MCF 10A (cell line): ENCODE measurements at regions of chr6 and their contacts with region 1.

Region 1: DNA sequence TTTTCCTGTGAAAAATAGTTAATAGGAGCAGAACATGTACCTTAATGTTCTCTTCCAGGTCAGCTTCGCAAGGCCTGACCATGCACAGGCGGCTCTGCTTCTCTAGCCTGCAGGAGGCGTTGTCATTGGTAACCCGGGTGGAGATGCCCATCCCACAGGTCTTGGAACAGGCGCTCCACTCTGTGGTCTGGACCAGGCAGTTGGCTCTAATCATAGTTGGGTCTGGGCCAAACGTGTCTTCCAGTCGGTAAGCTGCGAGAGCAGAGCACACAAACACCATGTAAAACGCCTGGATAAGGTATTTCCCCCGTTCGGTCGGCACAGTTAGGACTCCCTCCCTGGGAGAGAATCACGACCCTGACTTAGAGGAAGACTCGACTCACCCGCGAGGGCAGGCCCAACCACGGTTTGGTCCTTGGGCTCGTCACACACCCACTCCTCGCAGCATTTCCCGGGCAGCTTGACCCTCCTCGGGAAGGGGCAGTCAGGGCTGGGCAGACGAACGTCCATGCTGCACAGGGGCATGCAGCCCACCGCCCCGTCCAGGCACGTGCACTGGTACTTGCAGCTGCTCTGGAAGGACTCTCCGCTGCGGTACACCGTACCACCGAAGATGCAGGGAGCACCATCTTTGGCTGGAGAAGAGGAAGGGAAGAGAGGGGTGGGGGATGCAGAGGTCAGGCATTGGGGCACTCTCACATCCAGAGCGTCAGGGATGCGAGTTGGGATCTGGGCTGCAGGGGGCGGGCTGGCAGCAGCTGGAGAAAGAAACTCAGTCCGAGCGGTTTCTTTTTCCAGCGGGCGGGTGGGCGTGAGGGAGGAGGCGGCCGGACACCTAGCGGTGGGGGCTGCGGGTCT is 1.0 kb downstream of the CCN2 start:
- DNase-seq: peak; percentile 90
- H3K4me3 Mint-ChIP-seq: peak overlapping the region; percentile 88
- H3K27ac Mint-ChIP-seq: peak overlapping the region; percentile 76
- H3K4me1 Mint-ChIP-seq: peaks cover 44% of the 10 kb centered on the region
- H3K27me3 Mint-ChIP-seq: no peaks in the 10 kb centered on the region
- CTCF ChIP-seq: peak; percentile 45

Region 2: GRCh38 chr6:131773284-131773950 is 176.7 kb before region 1 on chr6:
- CTCF ChIA-PET with region 1: no interaction called
- POLR2A ChIA-PET with region 1: no interaction called
- intact Hi-C with region 1: no loop called
- DNase-seq: no peak
- H3K4me3 Mint-ChIP-seq: no peak overlapping the region
- H3K27ac Mint-ChIP-seq: no peak overlapping the region
- H3K4me1 Mint-ChIP-seq: no peaks in the 10 kb centered on the region
- H3K27me3 Mint-ChIP-seq: no peaks in the 10 kb centered on the region
- CTCF ChIP-seq: no peak

Region 3: DNA sequence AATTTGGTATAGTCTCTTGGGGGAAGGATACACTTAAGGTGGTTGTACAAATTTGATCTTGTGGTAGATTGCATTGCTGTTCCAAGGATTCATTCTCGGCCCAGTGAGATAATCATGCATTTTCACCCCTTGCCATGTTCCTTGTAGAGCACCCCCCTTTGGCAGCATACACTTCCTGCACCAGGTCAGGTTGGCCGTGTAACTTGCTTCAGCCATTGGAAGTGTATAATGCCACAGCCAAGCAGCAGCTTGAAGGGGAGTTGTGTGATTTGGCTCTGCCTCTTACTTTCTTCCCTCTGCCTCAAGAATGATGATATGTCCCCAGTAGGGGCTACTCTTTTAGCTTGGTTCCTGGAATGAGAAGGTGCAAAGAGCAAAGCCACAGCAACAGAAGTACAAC is 20.9 kb before region 1 on chr6:
- CTCF ChIA-PET with region 1: interaction called, 19 read pairs
- POLR2A ChIA-PET with region 1: interaction called, 4 read pairs
- intact Hi-C with region 1: no loop called
- DNase-seq: no peak
- H3K4me3 Mint-ChIP-seq: no peak overlapping the region
- H3K27ac Mint-ChIP-seq: no peak overlapping the region
- H3K4me1 Mint-ChIP-seq: peaks cover 6% of the 10 kb centered on the region
- H3K27me3 Mint-ChIP-seq: no peaks in the 10 kb centered on the region
- CTCF ChIP-seq: no peak

Region 4: DNA sequence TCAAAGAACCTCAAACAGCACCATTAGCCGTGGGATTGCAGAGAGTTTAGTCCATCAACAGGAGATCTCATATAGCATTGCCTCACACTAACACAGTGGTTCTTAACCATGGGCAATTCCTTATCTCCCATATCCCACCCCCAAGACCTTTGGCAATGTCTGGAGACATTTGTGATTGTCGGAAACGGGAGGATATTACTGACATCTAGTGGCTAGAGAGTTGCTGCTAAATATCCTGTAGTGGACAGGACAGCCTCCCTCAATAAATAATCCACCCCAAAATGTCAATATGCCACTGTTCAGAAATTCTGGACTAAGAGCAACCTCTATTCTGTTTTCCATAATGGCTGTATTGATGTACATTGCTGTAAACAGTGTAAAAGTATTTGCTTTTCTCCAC is 211.1 kb after region 1 on chr6:
- CTCF ChIA-PET with region 1: interaction called, 12 read pairs
- POLR2A ChIA-PET with region 1: interaction called, 3 read pairs
- intact Hi-C with region 1: loop called (anchors 1 kb)
- DNase-seq: peak; percentile 51
- H3K4me3 Mint-ChIP-seq: no peak overlapping the region
- H3K27ac Mint-ChIP-seq: no peak overlapping the region
- H3K4me1 Mint-ChIP-seq: no peaks in the 10 kb centered on the region
- H3K27me3 Mint-ChIP-seq: no peaks in the 10 kb centered on the region
- CTCF ChIP-seq: peak; percentile 57

Region 5: GRCh38 chr6:132322398-132322797 is 372.3 kb after region 1 on chr6:
- CTCF ChIA-PET with region 1: no interaction called
- POLR2A ChIA-PET with region 1: no interaction called
- intact Hi-C with region 1: no loop called
- DNase-seq: no peak
- H3K4me3 Mint-ChIP-seq: no peak overlapping the region
- H3K27ac Mint-ChIP-seq: peak overlapping the region; percentile 35
- H3K4me1 Mint-ChIP-seq: no peaks in the 10 kb centered on the region
- H3K27me3 Mint-ChIP-seq: no peaks in the 10 kb centered on the region
- CTCF ChIP-seq: no peak

Region 6: DNA sequence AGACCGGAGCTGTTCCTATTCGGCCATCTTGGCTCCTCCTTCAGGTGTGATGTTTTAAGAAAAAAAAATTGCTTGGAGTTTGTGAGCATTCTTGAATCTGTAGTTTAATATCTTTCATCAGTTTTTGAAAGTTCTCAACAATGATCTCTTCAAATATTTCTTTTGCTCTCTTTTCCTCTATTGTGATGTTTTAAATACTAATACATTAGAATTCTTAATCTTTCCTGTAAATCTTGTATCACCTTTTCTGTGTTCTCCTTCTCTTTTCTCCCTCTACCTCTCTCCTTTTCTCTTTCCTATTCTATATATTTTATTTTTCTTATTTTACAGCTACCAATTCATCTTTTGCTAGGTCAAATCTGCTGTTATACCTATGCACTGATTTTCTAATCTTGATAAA is 1076.6 kb after region 1 on chr6:
- CTCF ChIA-PET with region 1: no interaction called
- POLR2A ChIA-PET with region 1: no interaction called
- intact Hi-C with region 1: no loop called
- DNase-seq: no peak
- H3K4me3 Mint-ChIP-seq: no peak overlapping the region
- H3K27ac Mint-ChIP-seq: no peak overlapping the region
- H3K4me1 Mint-ChIP-seq: no peaks in the 10 kb centered on the region
- H3K27me3 Mint-ChIP-seq: peaks cover 48% of the 10 kb centered on the region
- CTCF ChIP-seq: no peak